ENCODE measurements at regions of chr12 and their contacts with region 1.

Region 1: GRCh38 chr12:1795785-1796514 is 24.4 kb upstream of the LRTM2 start:
- DNase-seq: peak; percentile 94
- H3K4me3 ChIP-seq: peak overlapping the region; percentile 62 to 76
- H3K27ac ChIP-seq: peak overlapping the region; percentile 73 to 81
- H3K4me1 ChIP-seq: peaks cover 5% of the 10 kb centered on the region
- H3K27me3 ChIP-seq: no peaks in the 10 kb centered on the region
- CTCF ChIP-seq: peak; percentile 99 to 100 (median 100)
- POLR2A ChIP-seq: no peak

Region 2: GRCh38 chr12:1502379-1502720 is 293.6 kb before region 1 on chr12:
- intact Hi-C with region 1: no loop called
- DNase-seq: no peak
- H3K4me3 ChIP-seq: no peak overlapping the region
- H3K27ac ChIP-seq: no peak overlapping the region
- H3K4me1 ChIP-seq: no peaks in the 10 kb centered on the region
- H3K27me3 ChIP-seq: no peaks in the 10 kb centered on the region
- CTCF ChIP-seq: no peak
- POLR2A ChIP-seq: no peak

Region 3: GRCh38 chr12:1650260-1650977 is 145.5 kb before region 1 on chr12:
- intact Hi-C with region 1: loop called (anchors 5 kb)
- DNase-seq: no peak
- H3K4me3 ChIP-seq: no peak overlapping the region
- H3K27ac ChIP-seq: peak overlapping the region; percentile 31 to 60
- H3K4me1 ChIP-seq: peaks cover 8% of the 10 kb centered on the region
- H3K27me3 ChIP-seq: no peaks in the 10 kb centered on the region
- CTCF ChIP-seq: no peak
- POLR2A ChIP-seq: no peak

Region 4: DNA sequence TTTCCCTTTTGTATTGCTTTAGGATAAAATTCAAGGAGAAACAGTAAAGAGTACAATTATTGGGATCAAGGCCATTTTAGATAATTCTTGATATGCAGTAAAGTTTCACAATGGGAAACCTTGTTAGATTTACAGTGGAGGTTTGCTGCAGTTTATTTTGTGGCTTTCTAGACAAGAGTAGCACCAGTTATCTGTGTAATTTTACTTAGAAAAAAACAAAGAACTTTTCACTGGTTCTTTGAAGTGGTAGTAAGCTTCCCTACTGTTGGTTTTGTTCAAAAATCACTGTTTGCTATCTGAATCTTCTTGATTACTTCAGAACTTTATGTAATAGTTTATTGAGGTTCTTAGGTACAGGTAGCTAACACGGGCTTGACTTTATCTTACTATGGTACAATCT is 63.0 kb before region 1 on chr12:
- intact Hi-C with region 1: no loop called
- DNase-seq: no peak
- H3K4me3 ChIP-seq: no peak overlapping the region
- H3K27ac ChIP-seq: peak overlapping the region in 1 of 2 donors; percentile 32
- H3K4me1 ChIP-seq: peaks cover 11% of the 10 kb centered on the region
- H3K27me3 ChIP-seq: no peaks in the 10 kb centered on the region
- CTCF ChIP-seq: no peak
- POLR2A ChIP-seq: no peak

Region 5: DNA sequence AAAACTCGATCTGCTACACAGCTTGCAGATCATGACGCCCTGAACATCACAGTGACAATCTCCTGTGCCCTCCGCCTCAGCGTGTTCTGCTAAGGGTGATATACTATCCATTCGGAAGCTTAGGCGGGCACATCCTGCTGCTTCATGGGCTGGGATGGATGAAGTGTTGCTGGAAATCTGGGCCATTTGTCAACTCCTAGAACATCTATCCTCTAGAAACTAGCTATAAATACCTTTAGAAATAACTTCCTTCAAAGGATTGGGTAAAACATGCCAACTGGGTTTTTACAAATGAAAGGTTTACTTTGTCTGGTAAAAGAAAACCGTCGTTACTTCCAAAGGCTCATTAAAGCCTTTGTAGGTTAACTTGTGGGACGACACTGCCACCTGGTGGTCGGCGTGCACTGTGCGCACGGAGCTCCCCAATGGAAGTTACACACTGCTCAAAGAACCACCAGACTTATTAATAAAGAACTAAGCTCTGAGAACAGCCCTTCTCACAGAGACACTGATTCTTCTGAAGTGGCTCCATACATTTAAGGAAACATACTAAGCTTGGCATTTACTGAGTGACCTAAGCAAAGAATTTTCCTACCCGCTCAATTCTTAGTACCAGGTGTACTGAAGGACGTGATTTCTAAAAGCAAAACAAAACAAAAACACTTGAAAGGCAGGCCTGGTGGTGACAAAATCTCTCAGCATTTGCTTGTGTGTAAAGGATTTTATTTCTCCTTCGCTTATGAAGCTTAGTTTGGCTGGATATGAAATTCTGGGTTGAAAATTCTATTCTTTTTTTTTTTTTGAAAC is 144.1 kb after region 1 on chr12:
- intact Hi-C with region 1: loop called (anchors 5 kb)
- DNase-seq: peak; percentile 93
- H3K4me3 ChIP-seq: no peak overlapping the region
- H3K27ac ChIP-seq: peak overlapping the region in 1 of 2 donors; percentile 10
- H3K4me1 ChIP-seq: peaks cover 14% of the 10 kb centered on the region
- H3K27me3 ChIP-seq: no peaks in the 10 kb centered on the region
- CTCF ChIP-seq: peak; percentile 96 to 97 (median 96)
- POLR2A ChIP-seq: no peak

Region 6: GRCh38 chr12:2248901-2249381 is 453.0 kb after region 1 on chr12:
- intact Hi-C with region 1: no loop called
- DNase-seq: no peak
- H3K4me3 ChIP-seq: no peak overlapping the region
- H3K27ac ChIP-seq: no peak overlapping the region
- H3K4me1 ChIP-seq: no peaks in the 10 kb centered on the region
- H3K27me3 ChIP-seq: no peaks in the 10 kb centered on the region
- CTCF ChIP-seq: no peak
- POLR2A ChIP-seq: no peak